ENCODE measurements at regions of chr9 and their contacts with region 1.

Region 1: DNA sequence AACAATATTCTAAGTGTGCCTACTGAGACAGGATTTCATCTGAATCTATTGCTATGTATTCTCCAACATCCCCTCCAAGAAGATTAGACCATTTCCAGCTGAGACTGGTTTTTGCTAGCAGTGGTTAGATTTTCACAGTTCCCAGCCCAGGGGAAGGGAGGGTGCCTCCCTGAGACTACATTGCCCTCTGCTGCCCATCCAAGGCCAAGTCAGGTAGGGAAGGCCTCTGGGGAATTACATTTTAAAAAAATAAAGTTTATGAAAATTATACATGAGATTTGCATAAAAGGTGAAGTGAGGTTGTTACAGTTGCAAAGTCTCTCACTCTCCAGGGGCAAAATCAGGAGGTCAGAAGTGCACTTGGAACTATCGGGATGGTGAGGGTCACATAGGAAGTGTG is 28.0 kb upstream of the SYK start:
- DNase-seq: peak in 1 of 3 donors; percentile 24
- H3K4me3 ChIP-seq: peak overlapping the region in 1 of 3 experiments; percentile 10
- H3K4me3 Mint-ChIP-seq: peak overlapping the region in 1 of 2 donors; percentile 30
- H3K27ac ChIP-seq: peak overlapping the region; percentile 8 to 65
- H3K27ac Mint-ChIP-seq: peak overlapping the region in 4 of 7 donors; percentile 30 to 67 (median 48)
- H3K4me1 ChIP-seq: peaks cover 58 to 59% of the 10 kb centered on the region in 2 donors
- H3K4me1 Mint-ChIP-seq: peaks cover 59% of the 10 kb centered on the region
- H3K27me3 ChIP-seq: no peaks in the 10 kb centered on the region
- H3K27me3 Mint-ChIP-seq: peaks cover 0 to 1% (median 0%) of the 10 kb centered on the region in 3 donors
- CTCF ChIP-seq: peak; percentile 44

Region 2: DNA sequence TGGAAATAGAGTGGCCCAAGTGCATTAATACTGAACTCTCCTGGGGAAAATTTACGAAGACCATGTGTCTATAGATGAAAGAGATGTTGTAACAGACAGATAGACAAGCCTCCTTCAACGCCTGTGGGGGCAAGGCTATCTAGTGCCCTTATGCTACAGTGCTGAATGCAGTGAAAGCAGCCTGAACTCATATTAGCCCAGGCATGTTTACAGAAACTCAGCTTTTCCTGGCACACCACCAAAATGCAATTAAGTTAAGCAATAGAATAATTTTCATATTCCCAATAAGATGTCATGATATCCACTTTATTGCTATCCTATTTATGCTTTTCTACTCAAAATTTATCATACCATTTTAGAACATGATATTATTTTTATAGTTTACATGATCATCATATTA is 408.0 kb before region 1 on chr9:
- intact Hi-C with region 1: no loop called
- DNase-seq: no peak
- H3K4me3 ChIP-seq: no peak overlapping the region
- H3K4me3 Mint-ChIP-seq: no peak overlapping the region
- H3K27ac ChIP-seq: no peak overlapping the region
- H3K27ac Mint-ChIP-seq: no peak overlapping the region
- H3K4me1 ChIP-seq: no peaks in the 10 kb centered on the region
- H3K4me1 Mint-ChIP-seq: no peaks in the 10 kb centered on the region
- H3K27me3 ChIP-seq: peaks cover 4 to 14% of the 10 kb centered on the region in 2 donors
- H3K27me3 Mint-ChIP-seq: peaks cover 5 to 14% (median 10%) of the 10 kb centered on the region in 3 donors
- CTCF ChIP-seq: no peak

Region 3: GRCh38 chr9:90808890-90809685 is 35.5 kb after region 1 on chr9:
- intact Hi-C with region 1: loop called in 1 of 2 experiments (anchors 5 kb)
- DNase-seq: peak; percentile 80 to 91 (median 84)
- H3K4me3 ChIP-seq: peak overlapping the region in 1 of 3 experiments; percentile 57
- H3K4me3 Mint-ChIP-seq: peak overlapping the region; percentile 72 to 95
- H3K27ac ChIP-seq: peak overlapping the region; percentile 70 to 83
- H3K27ac Mint-ChIP-seq: peak overlapping the region; percentile 88 to 99 (median 97)
- H3K4me1 ChIP-seq: peaks cover 86 to 100% of the 10 kb centered on the region in 2 donors
- H3K4me1 Mint-ChIP-seq: peaks cover 93% of the 10 kb centered on the region
- H3K27me3 ChIP-seq: no peaks in the 10 kb centered on the region
- H3K27me3 Mint-ChIP-seq: peaks cover 0 to 2% (median 0%) of the 10 kb centered on the region in 3 donors
- CTCF ChIP-seq: no peak

Region 4: GRCh38 chr9:90827181-90827871 is 53.7 kb after region 1 on chr9:
- intact Hi-C with region 1: loop called in 1 of 2 experiments (anchors 10 kb)
- DNase-seq: peak; percentile 86 to 93 (median 86)
- H3K4me3 ChIP-seq: peak overlapping the region; percentile 19 to 71 (median 46)
- H3K4me3 Mint-ChIP-seq: peak overlapping the region; percentile 75 to 88
- H3K27ac ChIP-seq: peak overlapping the region; percentile 75 to 84
- H3K27ac Mint-ChIP-seq: peak overlapping the region; percentile 88 to 97 (median 95)
- H3K4me1 ChIP-seq: peaks cover 35 to 44% of the 10 kb centered on the region in 2 donors
- H3K4me1 Mint-ChIP-seq: peaks cover 65% of the 10 kb centered on the region
- H3K27me3 ChIP-seq: no peaks in the 10 kb centered on the region
- H3K27me3 Mint-ChIP-seq: peaks cover 0 to 3% (median 0%) of the 10 kb centered on the region in 3 donors
- CTCF ChIP-seq: no peak

Measured in CD14-positive monocyte (primary cell).